A673 (cell line): ENCODE measurements at regions of chr13 and their contacts with region 1.

Region 1: GRCh38 chr13:108572782-108573211 is 56.6 kb upstream of the MYO16 start:
- DNase-seq: no peak
- H3K4me3 ChIP-seq: no peak overlapping the region
- H3K27ac ChIP-seq: no peak overlapping the region
- H3K4me1 ChIP-seq: no peaks in the 10 kb centered on the region
- H3K27me3 ChIP-seq: no peaks in the 10 kb centered on the region
- CTCF ChIP-seq: no peak

Region 2: GRCh38 chr13:108777421-108778420 is 204.9 kb after region 1 on chr13:
- CTCF ChIA-PET with region 1: no interaction called
- POLR2A ChIA-PET with region 1: no interaction called
- intact Hi-C with region 1: no loop called
- DNase-seq: peak; percentile 81
- H3K4me3 ChIP-seq: no peak overlapping the region
- H3K27ac ChIP-seq: no peak overlapping the region
- H3K4me1 ChIP-seq: no peaks in the 10 kb centered on the region
- H3K27me3 ChIP-seq: no peaks in the 10 kb centered on the region
- CTCF ChIP-seq: no peak

Region 3: DNA sequence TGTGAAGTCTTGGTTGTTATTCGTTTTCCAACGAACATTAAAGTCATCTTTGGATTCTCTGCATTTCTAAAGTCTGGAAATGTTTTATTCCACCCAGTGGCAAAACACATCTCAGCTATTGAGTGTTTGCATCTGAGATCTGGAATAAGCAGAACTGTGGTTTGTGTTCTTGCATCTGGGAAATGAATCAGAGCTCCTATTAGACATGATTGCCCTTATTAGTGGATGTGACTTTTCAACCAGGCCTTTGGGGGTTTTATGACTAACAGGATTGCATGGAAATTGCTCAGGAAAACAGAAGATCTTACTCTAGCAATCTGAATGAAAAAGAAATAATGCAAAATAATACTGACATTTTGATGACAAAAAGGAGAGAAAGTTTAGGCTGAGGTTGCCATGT is 724.8 kb after region 1 on chr13:
- CTCF ChIA-PET with region 1: no interaction called
- POLR2A ChIA-PET with region 1: interaction called, 16 read pairs
- intact Hi-C with region 1: no loop called
- DNase-seq: no peak
- H3K4me3 ChIP-seq: no peak overlapping the region
- H3K27ac ChIP-seq: no peak overlapping the region
- H3K4me1 ChIP-seq: no peaks in the 10 kb centered on the region
- H3K27me3 ChIP-seq: no peaks in the 10 kb centered on the region
- CTCF ChIP-seq: no peak